ENCODE measurements at regions of chr6 and their contacts with region 1.

Region 1: DNA sequence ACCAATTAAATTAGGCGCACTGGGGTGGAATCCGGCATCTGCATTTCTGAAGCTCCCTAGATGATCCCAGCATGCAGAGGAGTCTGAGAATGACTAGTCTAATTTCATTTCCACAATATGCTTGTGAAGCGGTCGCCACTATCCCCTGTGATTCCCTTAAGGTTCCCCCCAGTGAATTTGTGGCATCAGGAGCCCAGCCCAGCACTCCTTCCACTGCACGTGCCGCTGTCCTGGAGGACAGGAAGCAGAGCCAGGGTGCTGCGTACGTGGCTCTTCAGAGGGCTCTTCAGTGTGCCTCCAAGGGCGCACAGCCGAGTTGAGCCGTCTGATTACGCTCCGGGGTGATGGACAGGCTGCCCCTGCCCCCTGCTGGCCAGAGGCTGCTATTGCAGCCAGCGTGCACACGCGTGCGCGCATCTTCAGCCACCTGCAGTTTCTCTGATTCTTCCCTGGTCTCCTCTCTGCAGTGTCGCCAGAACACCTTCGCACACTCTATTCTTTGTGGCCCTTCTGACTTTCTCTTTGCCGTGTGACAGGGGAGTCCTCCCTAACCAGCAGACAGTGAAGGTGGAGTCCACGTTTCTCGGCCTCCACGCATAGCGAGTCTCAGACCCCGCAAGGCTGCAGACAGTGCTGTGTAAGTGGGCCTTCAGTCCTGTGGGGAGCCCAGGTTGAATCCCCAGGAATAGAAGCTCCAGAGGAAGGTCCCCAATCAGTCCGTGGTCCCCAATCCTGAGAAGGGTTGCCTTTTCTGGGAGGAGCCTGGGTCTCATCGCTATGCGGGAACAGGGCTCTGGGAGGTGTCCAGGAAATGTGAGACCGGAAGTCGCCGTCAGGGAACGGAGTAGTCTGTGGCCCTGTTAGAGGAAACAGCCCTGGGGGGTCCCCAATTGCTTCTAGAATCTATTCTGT is 16.5 kb upstream of the NCR2 start:
- DNase-seq: peak; percentile 62
- ATAC-seq: peak; percentile 98
- H3K4me3 ChIP-seq: no peak overlapping the region
- H3K27ac ChIP-seq: no peak overlapping the region
- H3K4me1 ChIP-seq: peaks cover 7% of the 10 kb centered on the region; the same call in 1 of the 2 replicates
- H3K27me3 ChIP-seq: 0 out of 4 replicates have a peak, but pooled peaks cover 0 to 2% of the 10 kb centered on the region in 2 experiments
- CTCF ChIP-seq: peak; percentile 90 to 100 (median 100)
- EP300 ChIP-seq: no peak
- POLR2A ChIP-seq: no peak
- RAD21 ChIP-seq: peak; percentile 94

Region 2: GRCh38 chr6:40444811-40445210 is 874.1 kb before region 1 on chr6:
- CTCF ChIA-PET with region 1: no interaction called
- POLR2A ChIA-PET with region 1: no interaction called
- RAD21 ChIA-PET with region 1: no interaction called
- SMC1A ChIA-PET with region 1: no interaction called
- in situ Hi-C with region 1: no loop called
- intact Hi-C with region 1: no loop called
- DNase-seq: no peak
- ATAC-seq: no peak
- H3K4me3 ChIP-seq: no peak overlapping the region
- H3K27ac ChIP-seq: no peak overlapping the region
- H3K4me1 ChIP-seq: no peaks in the 10 kb centered on the region
- H3K27me3 ChIP-seq: peaks cover 2 to 3% of the 10 kb centered on the region in 2 experiments
- CTCF ChIP-seq: no peak
- EP300 ChIP-seq: no peak
- POLR2A ChIP-seq: no peak
- RAD21 ChIP-seq: no peak

Region 3: GRCh38 chr6:40999569-40999968 is 319.3 kb before region 1 on chr6:
- CTCF ChIA-PET with region 1: no interaction called
- POLR2A ChIA-PET with region 1: no interaction called
- RAD21 ChIA-PET with region 1: no interaction called
- SMC1A ChIA-PET with region 1: no interaction called
- in situ Hi-C with region 1: loop called (anchors 10 kb)
- intact Hi-C with region 1: no loop called
- DNase-seq: peak; percentile 1
- ATAC-seq: peak; percentile 87
- H3K4me3 ChIP-seq: no peak overlapping the region
- H3K27ac ChIP-seq: no peak overlapping the region
- H3K4me1 ChIP-seq: no peaks in the 10 kb centered on the region
- H3K27me3 ChIP-seq: no peaks in the 10 kb centered on the region; a peak in 2 of 4 replicates
- CTCF ChIP-seq: peak; percentile 50 to 60 (median 55); a peak in 5 of 6 replicates
- EP300 ChIP-seq: no peak
- POLR2A ChIP-seq: no peak
- RAD21 ChIP-seq: no peak

Region 4: DNA sequence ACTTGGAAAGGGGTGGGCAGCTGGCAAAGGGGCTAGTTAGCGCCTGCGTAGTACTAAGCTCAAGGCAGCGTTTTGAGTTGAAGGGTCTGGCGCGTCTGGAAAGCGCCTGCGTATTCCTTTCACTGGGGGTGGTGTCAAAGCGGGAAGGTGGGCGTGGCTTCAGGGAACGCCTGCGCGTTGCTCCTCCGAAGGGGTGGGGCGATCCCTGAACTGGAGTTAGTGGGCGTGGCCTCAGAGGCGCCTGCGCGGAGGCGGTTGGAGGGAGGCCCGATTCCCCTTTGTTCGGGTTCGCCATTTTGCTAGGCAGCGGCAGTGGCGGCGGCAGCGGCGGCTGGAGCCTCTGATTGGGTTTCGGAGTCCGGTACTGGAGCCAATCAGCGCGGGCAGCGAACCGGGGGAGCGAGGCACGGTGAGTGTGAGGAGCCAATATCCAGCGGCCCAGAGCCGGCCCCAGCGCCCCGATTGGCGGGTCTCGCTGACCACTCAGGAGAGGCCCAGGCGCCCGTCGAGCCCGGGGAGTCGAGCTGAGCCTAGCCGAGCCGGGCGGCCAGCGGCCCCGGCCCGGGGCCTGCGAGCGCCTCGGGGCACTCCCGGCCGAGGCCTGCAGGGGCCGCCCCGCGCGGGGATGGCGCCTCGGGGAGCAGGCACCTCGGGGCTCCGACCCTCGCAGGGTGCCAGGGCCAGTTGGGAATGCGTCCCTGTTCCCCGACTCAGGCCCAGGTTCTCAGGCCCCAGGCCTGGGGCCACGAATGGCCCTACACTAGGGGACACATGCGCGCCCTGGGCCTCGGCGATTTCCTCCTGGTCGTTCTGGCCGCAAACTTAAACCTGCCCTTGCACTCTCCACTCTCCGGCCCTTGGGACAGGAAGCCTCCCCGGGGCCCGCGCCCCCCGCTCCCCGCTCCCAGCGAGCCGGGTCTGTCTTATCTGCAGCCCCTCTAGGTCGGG is 246.0 kb before region 1 on chr6 and contains the start of gene NFYA:
- CTCF ChIA-PET with region 1: interaction called, 12 read pairs
- POLR2A ChIA-PET with region 1: interaction called, 6 read pairs
- RAD21 ChIA-PET with region 1: interaction called, 4 read pairs
- SMC1A ChIA-PET with region 1: interaction called, 3 read pairs
- in situ Hi-C with region 1: no loop called
- intact Hi-C with region 1: loop called (anchors 5 kb)
- DNase-seq: no peak
- ATAC-seq: peak; percentile 85
- H3K4me3 ChIP-seq: peak within 1 kb of the TSS; percentile 88
- H3K27ac ChIP-seq: peak within 1 kb of the TSS; percentile 99
- H3K4me1 ChIP-seq: peaks cover 7% of the 10 kb centered on the region; the same call in 1 of the 2 replicates
- H3K27me3 ChIP-seq: no peaks in the 10 kb centered on the region
- CTCF ChIP-seq: peak in 2 of 3 experiments; percentile 32 to 34; a peak in 4 of 6 replicates
- EP300 ChIP-seq: no peak
- POLR2A ChIP-seq: peak; percentile 33
- RAD21 ChIP-seq: no peak
- polyA plus RNA-seq, gene NFYA: 6.4 to 7.3 TPM

Region 5: DNA sequence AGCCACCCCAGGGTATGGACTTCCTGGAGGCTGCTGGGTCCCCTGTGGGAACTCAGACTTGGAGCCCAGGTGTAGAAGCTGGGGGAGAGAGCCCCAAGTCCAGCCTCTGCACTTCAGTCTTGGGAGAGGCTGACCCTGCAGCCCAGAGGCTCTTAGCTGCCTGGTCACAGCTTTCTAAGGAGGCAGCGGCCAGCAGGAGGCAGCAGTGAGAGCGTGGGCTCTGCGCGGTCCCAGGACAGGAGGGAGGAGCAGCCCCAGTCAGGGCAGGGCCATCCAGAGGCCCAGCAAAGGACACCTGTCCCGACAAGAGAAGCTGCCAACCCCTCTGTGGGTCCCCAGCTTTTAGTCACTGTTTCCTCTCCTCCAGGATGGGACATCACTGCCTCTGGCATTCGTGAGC is 127.3 kb before region 1 on chr6:
- CTCF ChIA-PET with region 1: interaction called, 6 read pairs
- POLR2A ChIA-PET with region 1: interaction called, 3 read pairs
- RAD21 ChIA-PET with region 1: interaction called, 4 read pairs
- SMC1A ChIA-PET with region 1: interaction called, 5 read pairs
- in situ Hi-C with region 1: no loop called
- intact Hi-C with region 1: loop called (anchors 5 kb)
- DNase-seq: no peak
- ATAC-seq: peak; percentile 83
- H3K4me3 ChIP-seq: no peak overlapping the region
- H3K27ac ChIP-seq: no peak overlapping the region
- H3K4me1 ChIP-seq: no peaks in the 10 kb centered on the region
- H3K27me3 ChIP-seq: no peaks in the 10 kb centered on the region; a peak in 1 of 4 replicates
- CTCF ChIP-seq: peak; percentile 40 to 67 (median 61); a peak in 5 of 6 replicates
- EP300 ChIP-seq: no peak
- POLR2A ChIP-seq: no peak
- RAD21 ChIP-seq: peak; percentile 48

Region 6: DNA sequence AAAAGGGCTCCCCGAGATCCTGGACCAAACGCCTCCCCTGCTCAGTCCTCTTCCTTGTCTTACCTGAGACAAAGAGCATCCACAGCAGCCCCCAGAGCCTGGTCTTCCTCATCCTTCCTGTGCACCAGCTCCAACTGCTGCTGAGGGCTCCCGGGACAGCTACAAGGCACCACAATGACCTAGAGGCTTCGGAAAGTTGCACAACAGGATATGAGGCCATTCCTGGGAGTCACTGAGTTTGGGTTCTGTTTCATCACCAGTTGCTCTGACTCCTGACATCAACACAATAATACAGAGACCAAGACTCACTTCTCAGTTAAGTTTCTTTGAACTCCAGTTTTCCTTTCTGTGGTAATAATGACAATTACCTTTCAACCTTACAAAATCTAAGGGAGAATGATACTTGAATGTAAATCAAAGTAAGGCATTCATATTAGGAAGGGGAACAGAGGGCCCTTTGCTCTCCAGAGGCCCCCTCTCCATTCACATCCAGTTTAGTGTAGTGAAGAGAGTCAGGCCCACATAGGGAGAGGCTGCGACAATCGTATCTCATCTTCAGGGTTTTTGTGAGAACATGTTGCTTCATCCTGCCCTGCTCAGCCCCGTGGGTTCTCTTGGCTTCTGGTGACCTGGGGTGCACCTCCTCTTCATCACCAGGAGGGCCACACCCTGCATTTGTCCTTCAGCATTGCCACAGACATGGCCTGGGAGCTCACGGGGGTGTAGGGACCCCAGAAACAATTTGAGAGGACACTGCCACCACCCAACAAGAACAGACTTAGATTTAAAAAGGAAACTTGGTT is 32.2 kb before region 1 on chr6 and contains the start of gene TREM1:
- CTCF ChIA-PET with region 1: interaction called, 28 read pairs
- POLR2A ChIA-PET with region 1: no interaction called
- RAD21 ChIA-PET with region 1: interaction called, 14 read pairs
- SMC1A ChIA-PET with region 1: interaction called, 8 read pairs
- in situ Hi-C with region 1: no loop called
- intact Hi-C with region 1: no loop called
- DNase-seq: no peak
- ATAC-seq: no peak
- H3K4me3 ChIP-seq: no peak within 1 kb of the TSS
- H3K27ac ChIP-seq: no peak within 1 kb of the TSS
- H3K4me1 ChIP-seq: no peaks in the 10 kb centered on the region
- H3K27me3 ChIP-seq: no peaks in the 10 kb centered on the region
- CTCF ChIP-seq: no peak
- EP300 ChIP-seq: no peak
- POLR2A ChIP-seq: no peak
- RAD21 ChIP-seq: no peak
- polyA plus RNA-seq, gene TREM1: 0.11 to 0.69 TPM

Region 7: GRCh38 chr6:41306187-41306854 is 12.6 kb before region 1 on chr6:
- CTCF ChIA-PET with region 1: interaction called, 196 read pairs
- POLR2A ChIA-PET with region 1: interaction called, 10 read pairs
- RAD21 ChIA-PET with region 1: interaction called, 143 read pairs
- SMC1A ChIA-PET with region 1: interaction called, 157 read pairs
- in situ Hi-C with region 1: no loop called
- intact Hi-C with region 1: loop called (anchors 1 kb)
- DNase-seq: no peak
- ATAC-seq: peak; percentile 68
- H3K4me3 ChIP-seq: no peak overlapping the region
- H3K27ac ChIP-seq: no peak overlapping the region
- H3K4me1 ChIP-seq: peaks cover 3% of the 10 kb centered on the region; the same call in 1 of the 2 replicates
- H3K27me3 ChIP-seq: no peaks in the 10 kb centered on the region; a peak in 1 of 4 replicates
- CTCF ChIP-seq: peak; percentile 50 to 66 (median 63)
- EP300 ChIP-seq: no peak
- POLR2A ChIP-seq: no peak
- RAD21 ChIP-seq: peak; percentile 74

Region 8: GRCh38 chr6:41379306-41379705 is 60.4 kb after region 1 on chr6:
- CTCF ChIA-PET with region 1: no interaction called
- POLR2A ChIA-PET with region 1: no interaction called
- RAD21 ChIA-PET with region 1: no interaction called
- SMC1A ChIA-PET with region 1: no interaction called
- in situ Hi-C with region 1: no loop called
- intact Hi-C with region 1: no loop called
- DNase-seq: no peak
- ATAC-seq: no peak
- H3K4me3 ChIP-seq: no peak overlapping the region
- H3K27ac ChIP-seq: no peak overlapping the region
- H3K4me1 ChIP-seq: no peaks in the 10 kb centered on the region
- H3K27me3 ChIP-seq: peaks cover 18 to 20% of the 10 kb centered on the region in 2 experiments
- CTCF ChIP-seq: no peak
- EP300 ChIP-seq: no peak
- POLR2A ChIP-seq: no peak
- RAD21 ChIP-seq: no peak